Activated CD4-positive, alpha-beta T cell treated with anti-CD3 and anti-CD28 coated beads for 36 hours (primary cell): ENCODE measurements at regions of chr3 and their contacts with region 1.

Region 1: GRCh38 chr3:49839193-49839809 is 17.1 kb downstream of the TRAIP start:
- DNase-seq: peak; percentile 89
- ATAC-seq: peak; percentile 95
- H3K4me3 Mint-ChIP-seq: no peak overlapping the region
- H3K27ac Mint-ChIP-seq: no peak overlapping the region
- H3K4me1 Mint-ChIP-seq: no peaks in the 10 kb centered on the region
- H3K27me3 Mint-ChIP-seq: no peaks in the 10 kb centered on the region

Region 2: DNA sequence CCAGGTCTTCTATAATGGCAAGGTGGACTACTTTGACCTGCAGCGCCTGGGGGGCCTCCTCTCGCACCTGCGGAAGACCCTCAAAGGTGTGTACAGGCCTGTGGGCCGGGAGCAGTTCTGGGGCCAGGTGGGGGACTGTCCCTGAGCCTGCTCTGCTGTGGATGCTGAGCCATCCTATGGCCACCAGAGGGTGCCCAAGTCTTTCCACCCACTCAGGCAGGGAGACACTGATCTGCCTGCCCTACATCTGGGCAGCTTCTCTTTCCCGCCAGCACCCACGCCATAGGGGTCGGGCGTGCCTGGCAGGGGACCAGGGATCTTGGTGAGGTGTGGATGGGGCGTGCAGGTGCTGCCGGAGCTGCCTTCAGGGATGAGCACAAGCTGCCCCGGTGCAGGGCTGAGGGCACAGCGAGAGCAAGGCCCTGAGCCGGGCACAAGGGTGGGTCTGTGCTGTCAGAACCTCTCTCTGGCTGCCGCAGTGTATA is 135.8 kb before region 1 on chr3:
- CTCF ChIA-PET with region 1: interaction called, 3 read pairs
- POLR2A ChIA-PET with region 1: no interaction called
- intact Hi-C with region 1: loop called (anchors 1 kb)
- DNase-seq: peak; percentile 81
- ATAC-seq: peak; percentile 99
- H3K4me3 Mint-ChIP-seq: no peak overlapping the region
- H3K27ac Mint-ChIP-seq: no peak overlapping the region
- H3K4me1 Mint-ChIP-seq: no peaks in the 10 kb centered on the region
- H3K27me3 Mint-ChIP-seq: no peaks in the 10 kb centered on the region

Region 3: DNA sequence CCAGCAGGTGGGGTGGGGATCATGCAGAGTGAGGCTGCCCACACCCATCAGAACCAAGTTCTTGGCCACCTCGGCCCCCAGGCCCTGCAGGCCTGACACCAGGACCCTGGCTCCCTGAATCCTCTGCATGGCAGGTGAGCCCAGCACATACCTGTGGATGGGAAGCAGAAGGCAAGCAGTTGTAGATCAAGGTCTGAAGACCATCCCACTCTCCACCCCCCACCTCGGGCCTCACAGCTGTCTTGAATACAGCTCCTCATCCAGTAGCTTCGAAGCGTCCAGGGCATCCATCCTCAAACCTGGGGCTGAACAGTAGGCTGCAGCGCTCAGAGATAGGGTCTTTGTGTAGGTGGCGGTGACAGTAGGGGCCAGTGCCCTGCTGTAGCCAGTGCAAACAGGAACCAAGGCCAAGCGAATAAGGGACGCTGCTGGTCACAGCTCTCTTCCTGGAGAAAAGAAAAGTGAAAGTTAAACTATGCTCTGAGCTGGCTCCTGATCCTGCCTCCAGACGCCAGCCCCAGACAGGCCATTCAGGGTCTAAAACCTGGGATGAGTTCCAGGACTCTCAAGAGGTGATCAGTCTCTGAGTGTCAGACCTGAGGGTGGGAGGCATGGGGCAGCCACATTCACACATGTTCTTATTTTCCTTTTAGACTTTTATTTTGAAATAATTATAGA is 25.7 kb before region 1 on chr3 and contains the start of gene UBA7:
- CTCF ChIA-PET with region 1: interaction called, 24 read pairs
- POLR2A ChIA-PET with region 1: no interaction called
- intact Hi-C with region 1: no loop called
- DNase-seq: peak; percentile 62
- ATAC-seq: peak; percentile 92
- H3K4me3 Mint-ChIP-seq: peak within 1 kb of the TSS; percentile 89
- H3K27ac Mint-ChIP-seq: peak within 1 kb of the TSS; percentile 95
- H3K4me1 Mint-ChIP-seq: peaks cover 14% of the 10 kb centered on the region
- H3K27me3 Mint-ChIP-seq: no peaks in the 10 kb centered on the region
- total RNA-seq, gene UBA7: 85.5 to 85.7 TPM